ENCODE measurements at regions of chr19 and their contacts with region 1.

Region 1: DNA sequence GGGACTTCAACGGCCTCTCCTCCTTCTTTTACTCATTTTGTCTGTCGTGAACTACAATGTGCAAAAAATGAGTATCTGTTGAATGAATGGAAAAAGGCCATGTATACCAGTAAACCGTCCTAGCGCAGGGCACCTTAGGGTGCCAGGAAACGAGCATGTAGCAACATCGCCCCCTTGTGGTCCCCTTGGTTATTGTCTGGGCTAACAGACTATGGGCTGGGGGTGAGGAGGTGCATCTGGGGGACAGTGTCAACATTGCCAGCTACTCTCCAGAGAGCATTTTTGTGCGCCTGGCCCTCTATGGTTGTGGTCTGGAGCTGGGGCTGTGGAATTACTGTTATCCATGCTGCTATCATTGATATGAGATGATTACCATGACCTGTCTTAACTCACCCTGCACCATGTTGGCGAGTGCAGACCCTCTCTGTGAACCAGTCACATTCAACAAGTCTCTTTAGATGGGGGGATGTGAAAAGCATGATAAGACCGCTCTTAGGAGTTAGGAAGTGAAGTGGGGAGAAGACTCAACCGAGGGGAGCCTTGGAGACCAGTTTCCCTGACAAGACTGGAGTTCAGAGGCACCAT is 22.8 kb upstream of the SIGLEC11 start:
- DNase-seq: no peak
- H3K4me3 ChIP-seq: no peak overlapping the region
- H3K27ac ChIP-seq: no peak overlapping the region
- H3K4me1 ChIP-seq: peaks cover 0 to 3% (median 1%) of the 10 kb centered on the region in 4 donors
- H3K27me3 ChIP-seq: no peaks in the 10 kb centered on the region
- CTCF ChIP-seq: peak; percentile 62 to 89 (median 81)
- EP300 ChIP-seq: no peak
- POLR2A ChIP-seq: no peak

Region 2: DNA sequence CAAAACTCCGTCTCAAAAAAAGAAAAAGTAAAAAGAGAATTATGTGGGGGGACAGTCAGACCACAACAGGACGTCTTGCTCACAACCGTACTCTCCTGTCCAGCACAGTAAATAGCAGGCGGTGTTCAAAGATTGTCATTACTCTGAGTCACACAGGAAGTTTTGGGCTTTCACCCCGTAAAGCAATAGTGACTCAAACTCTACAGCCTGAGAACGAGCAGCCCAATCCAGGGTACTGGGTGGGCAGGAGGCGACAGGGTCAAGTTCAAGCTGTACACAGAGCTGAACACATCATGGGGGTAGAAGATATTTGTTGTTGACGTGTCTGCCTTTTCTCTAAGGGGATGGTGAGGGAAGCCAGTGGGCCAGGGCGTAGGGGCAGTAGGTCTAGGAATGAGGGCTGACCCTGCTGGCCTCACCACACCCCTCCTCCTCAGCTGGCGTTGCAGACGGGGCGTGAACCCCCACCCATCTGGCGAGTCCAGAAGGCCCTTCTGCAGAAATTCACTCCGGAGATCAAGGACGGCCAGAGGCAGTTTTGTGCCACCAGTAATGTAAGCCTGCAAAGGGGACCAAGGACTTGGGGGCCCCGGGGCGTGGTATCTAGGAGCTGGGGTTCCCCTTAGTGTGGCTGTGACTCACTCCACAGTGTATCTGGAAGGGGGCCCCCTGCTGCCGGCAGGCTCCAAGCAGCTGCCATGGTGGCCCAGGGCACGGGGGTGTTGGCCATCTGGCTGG is 369.5 kb before region 1 on chr19:
- intact Hi-C with region 1: no loop called
- DNase-seq: no peak
- H3K4me3 ChIP-seq: no peak overlapping the region
- H3K27ac ChIP-seq: no peak overlapping the region
- H3K4me1 ChIP-seq: peaks cover 0 to 11% (median 6%) of the 10 kb centered on the region in 4 donors
- H3K27me3 ChIP-seq: no peaks in the 10 kb centered on the region
- CTCF ChIP-seq: no peak
- EP300 ChIP-seq: no peak
- POLR2A ChIP-seq: no peak

Region 3: GRCh38 chr19:49911381-49912145 is 72.2 kb before region 1 on chr19:
- intact Hi-C with region 1: no loop called
- DNase-seq: no peak
- H3K4me3 ChIP-seq: no peak overlapping the region
- H3K27ac ChIP-seq: peak overlapping the region in 2 of 4 donors; percentile 27 to 33
- H3K4me1 ChIP-seq: peaks cover 0 to 12% (median 5%) of the 10 kb centered on the region in 4 donors
- H3K27me3 ChIP-seq: no peaks in the 10 kb centered on the region
- CTCF ChIP-seq: no peak
- EP300 ChIP-seq: no peak
- POLR2A ChIP-seq: no peak

Region 4: DNA sequence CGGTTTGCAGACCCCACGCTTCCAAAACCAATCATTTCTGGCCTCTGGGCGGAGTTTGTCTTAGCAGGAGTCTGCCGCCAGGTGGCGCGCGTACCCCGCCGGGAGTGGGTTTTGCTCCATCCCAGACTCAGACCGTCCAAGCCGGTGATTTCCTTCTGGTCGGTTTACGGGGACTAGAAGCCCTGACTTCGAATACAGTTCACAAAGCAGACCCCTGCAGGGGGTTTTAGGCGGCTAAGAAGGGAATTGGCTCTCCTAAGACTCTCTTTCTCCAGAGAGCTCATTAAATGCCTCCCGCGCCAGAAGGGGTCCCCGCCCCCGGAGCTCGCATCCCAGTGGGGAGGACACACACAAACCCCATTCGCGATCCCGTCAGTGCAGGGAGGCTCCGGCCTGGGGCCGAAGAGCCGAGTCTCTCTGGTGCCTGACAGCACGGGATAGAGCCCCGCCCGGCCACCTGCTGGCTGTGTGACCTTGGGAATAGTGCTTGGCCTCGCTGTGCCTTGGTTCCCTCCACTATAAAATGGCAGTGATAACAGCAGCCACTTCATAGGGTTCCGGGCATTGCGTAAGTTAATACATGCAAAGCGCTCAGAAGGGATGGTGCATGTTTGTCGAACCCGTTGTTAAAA is 45.9 kb before region 1 on chr19:
- intact Hi-C with region 1: loop called (anchors 1 kb)
- DNase-seq: peak; percentile 86
- H3K4me3 ChIP-seq: peak overlapping the region in 2 of 4 donors; percentile 33 to 34
- H3K27ac ChIP-seq: no peak overlapping the region
- H3K4me1 ChIP-seq: peaks cover 0 to 8% (median 7%) of the 10 kb centered on the region in 4 donors
- H3K27me3 ChIP-seq: no peaks in the 10 kb centered on the region
- CTCF ChIP-seq: peak; percentile 71 to 94 (median 91)
- EP300 ChIP-seq: no peak
- POLR2A ChIP-seq: no peak

Region 5: DNA sequence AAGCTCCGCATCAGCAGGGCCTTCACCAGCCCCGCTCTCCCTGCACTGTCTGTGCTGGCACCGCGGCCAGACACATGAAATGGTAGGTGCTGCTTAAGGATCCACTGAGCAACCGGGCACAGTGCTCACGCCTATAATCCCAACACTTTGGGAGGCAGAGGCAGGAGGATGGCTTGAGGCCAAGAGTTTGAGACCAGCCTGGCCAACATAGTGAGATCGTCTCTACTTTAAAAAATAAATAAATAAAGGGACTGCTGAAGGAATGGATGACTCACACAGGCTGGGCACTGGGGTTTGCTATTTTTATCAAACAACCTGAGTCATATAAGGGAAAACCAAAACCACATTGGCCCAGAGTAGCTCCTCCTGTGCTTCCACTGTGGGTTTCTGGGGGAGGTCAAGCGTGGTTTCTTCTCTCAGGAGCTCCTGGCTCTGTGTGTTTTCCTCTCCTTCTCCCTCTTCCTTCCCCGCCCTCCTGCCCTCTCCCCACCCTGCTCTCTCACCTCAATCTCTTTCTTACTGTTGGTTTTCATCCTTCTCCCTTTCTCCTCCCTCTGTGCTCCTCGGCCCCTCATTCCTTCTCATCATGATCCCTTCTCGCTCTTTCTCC is 20.2 kb after region 1 on chr19:
- intact Hi-C with region 1: no loop called
- DNase-seq: peak; percentile 83
- H3K4me3 ChIP-seq: no peak overlapping the region
- H3K27ac ChIP-seq: peak overlapping the region; percentile 79 to 85 (median 80)
- H3K4me1 ChIP-seq: peaks cover 0 to 36% (median 24%) of the 10 kb centered on the region in 4 donors
- H3K27me3 ChIP-seq: no peaks in the 10 kb centered on the region
- CTCF ChIP-seq: no peak
- EP300 ChIP-seq: no peak
- POLR2A ChIP-seq: no peak

Region 6: DNA sequence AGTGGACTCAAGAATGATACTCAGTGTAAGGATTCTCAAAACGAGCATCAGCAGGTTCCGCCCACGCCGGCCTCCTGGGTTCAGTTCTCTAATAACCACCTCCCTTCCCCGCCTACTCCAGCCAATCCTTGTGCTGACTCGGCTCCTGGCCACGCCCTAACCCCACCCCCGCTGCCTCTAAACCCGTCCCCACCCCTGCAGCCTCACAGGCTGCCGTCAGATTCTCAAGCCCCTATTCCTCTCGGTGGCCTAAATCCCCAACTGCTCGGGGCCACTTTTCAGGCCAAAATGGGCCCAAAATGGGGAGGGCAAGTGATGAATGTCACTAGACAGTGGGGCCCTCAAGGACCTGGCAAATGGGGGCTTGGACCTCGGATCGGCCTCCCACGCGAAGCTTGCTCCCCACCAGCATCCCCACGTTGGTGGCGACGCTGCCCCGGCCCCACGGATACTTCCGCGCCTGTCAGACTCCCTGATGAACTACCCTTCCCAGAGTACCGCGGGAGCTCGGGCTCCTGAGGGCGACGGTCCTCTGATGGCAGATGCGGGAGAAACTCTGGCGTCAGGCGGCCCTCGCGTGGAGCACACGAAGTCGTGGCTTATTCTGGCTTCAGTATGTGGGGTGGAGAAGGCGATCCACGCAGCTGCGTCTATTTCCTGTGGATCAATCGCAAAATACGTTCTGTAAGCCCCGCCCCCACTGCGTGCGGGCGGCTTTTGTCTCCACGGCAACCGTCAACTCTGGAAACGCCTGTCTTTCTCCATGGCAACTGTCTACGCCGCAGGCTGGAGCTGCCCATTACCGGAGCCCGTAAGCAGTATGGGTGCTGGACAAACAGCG is 66.9 kb after region 1 on chr19:
- intact Hi-C with region 1: no loop called
- DNase-seq: peak; percentile 89
- H3K4me3 ChIP-seq: peak overlapping the region; percentile 23 to 57 (median 50)
- H3K27ac ChIP-seq: peak overlapping the region; percentile 58 to 77 (median 70)
- H3K4me1 ChIP-seq: peaks cover 0 to 16% (median 12%) of the 10 kb centered on the region in 4 donors
- H3K27me3 ChIP-seq: no peaks in the 10 kb centered on the region
- CTCF ChIP-seq: no peak
- EP300 ChIP-seq: no peak
- POLR2A ChIP-seq: no peak